ENCODE measurements at regions of chr6 and their contacts with region 1.

Region 1: GRCh38 chr6:53171605-53172446 is 23.2 kb upstream of the GCM1 start:
- DNase-seq: peak; percentile 82 to 95 (median 92)
- ATAC-seq: peak; percentile 100
- H3K4me3 ChIP-seq: no peak overlapping the region
- H3K4me3 Mint-ChIP-seq: no peak overlapping the region
- H3K27ac ChIP-seq: no peak overlapping the region
- H3K27ac Mint-ChIP-seq: no peak overlapping the region
- H3K4me1 ChIP-seq: no peaks in the 10 kb centered on the region
- H3K4me1 Mint-ChIP-seq: no peaks in the 10 kb centered on the region
- H3K27me3 ChIP-seq: no peaks in the 10 kb centered on the region
- H3K27me3 Mint-ChIP-seq: no peaks in the 10 kb centered on the region
- CTCF ChIP-seq: peak; percentile 100

Region 2: DNA sequence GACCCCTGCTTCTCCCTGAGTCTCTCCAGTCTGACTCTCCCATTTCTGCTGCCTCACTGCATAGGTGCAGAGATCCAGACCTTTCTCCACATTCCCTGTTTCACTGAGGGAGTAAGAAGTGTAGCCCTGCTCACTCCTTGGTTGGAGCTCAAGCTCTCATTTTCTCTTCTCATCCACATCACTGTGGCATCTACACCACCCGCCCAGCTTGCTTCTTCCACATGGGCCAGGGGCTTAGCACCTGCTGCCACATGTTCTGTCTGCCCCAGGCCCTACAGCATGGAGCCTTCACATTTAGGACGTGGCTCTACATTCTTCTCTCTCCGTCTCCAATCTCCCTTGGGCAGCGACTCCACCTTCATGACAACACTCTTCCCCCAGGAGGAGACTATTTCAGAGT is 322.7 kb before region 1 on chr6:
- CTCF ChIA-PET with region 1: no interaction called
- POLR2A ChIA-PET with region 1: no interaction called
- intact Hi-C with region 1: no loop called
- DNase-seq: no peak
- ATAC-seq: no peak
- H3K4me3 ChIP-seq: no peak overlapping the region
- H3K4me3 Mint-ChIP-seq: no peak overlapping the region
- H3K27ac ChIP-seq: no peak overlapping the region
- H3K27ac Mint-ChIP-seq: no peak overlapping the region
- H3K4me1 ChIP-seq: no peaks in the 10 kb centered on the region
- H3K4me1 Mint-ChIP-seq: no peaks in the 10 kb centered on the region
- H3K27me3 ChIP-seq: peaks cover 0 to 3% of the 10 kb centered on the region in 2 experiments
- H3K27me3 Mint-ChIP-seq: peaks cover 24% of the 10 kb centered on the region
- CTCF ChIP-seq: no peak

Region 3: DNA sequence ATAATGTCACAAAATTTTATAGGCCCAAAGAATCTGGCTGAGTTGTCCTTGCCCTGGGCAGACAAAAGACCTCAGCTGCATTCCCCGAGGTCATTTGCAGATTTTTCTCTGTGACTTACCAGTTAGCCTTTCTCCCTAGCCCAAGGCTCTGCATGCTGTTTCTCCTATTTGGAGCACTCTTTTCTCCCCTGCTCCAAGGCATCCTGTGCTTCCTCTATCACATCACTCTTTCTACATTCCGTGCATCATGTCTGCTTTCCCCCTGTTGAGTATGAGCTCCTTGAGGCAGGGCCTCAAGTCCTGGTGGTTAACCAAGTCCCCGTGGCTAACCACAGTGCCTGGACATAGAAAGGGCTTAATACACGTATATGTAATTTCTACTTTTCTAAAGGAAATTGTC is 261.7 kb before region 1 on chr6:
- CTCF ChIA-PET with region 1: no interaction called
- POLR2A ChIA-PET with region 1: no interaction called
- intact Hi-C with region 1: no loop called
- DNase-seq: no peak
- ATAC-seq: no peak
- H3K4me3 ChIP-seq: no peak overlapping the region
- H3K4me3 Mint-ChIP-seq: no peak overlapping the region
- H3K27ac ChIP-seq: no peak overlapping the region
- H3K27ac Mint-ChIP-seq: no peak overlapping the region
- H3K4me1 ChIP-seq: no peaks in the 10 kb centered on the region
- H3K4me1 Mint-ChIP-seq: no peaks in the 10 kb centered on the region
- H3K27me3 ChIP-seq: no peaks in the 10 kb centered on the region
- H3K27me3 Mint-ChIP-seq: no peaks in the 10 kb centered on the region
- CTCF ChIP-seq: no peak

Region 4: DNA sequence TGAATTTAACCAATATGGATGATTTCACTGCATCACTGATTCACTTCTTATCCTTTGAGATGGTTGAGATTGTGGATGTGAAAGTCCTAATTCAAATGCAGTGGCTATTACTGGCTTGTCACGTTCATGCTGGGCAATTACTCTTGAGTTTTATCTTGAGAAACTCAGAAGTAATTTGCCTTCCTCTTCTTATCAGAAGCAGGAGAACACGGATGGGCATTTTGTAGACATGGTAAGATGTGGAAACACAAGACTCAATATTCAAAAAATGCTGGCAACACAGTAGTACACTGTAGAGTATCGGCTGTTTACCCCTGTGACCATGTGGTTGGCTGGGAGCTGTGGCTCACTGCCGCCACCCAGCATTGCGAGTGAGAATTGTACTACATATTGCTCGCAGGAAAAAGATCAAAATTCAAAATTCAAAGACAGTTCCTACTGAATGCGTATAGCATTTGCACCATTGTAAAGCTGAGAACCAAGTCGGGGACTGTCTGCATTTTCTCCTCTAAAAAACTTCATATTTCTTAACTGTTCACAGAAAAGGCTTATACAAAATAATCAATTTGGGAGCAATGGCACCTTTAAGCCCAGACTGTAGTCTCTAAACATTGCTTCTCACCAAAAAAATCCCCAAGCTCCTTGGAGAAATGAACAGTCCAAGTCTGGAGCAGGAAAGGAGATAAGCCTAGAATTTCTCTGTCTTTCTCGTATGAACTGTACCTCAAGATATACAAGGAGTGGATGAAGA is 238.9 kb after region 1 on chr6:
- CTCF ChIA-PET with region 1: interaction called, 25 read pairs
- POLR2A ChIA-PET with region 1: no interaction called
- intact Hi-C with region 1: loop called (anchors 1 kb)
- DNase-seq: peak; percentile 40 to 83 (median 60)
- ATAC-seq: peak; percentile 100
- H3K4me3 ChIP-seq: no peak overlapping the region
- H3K4me3 Mint-ChIP-seq: no peak overlapping the region
- H3K27ac ChIP-seq: no peak overlapping the region
- H3K27ac Mint-ChIP-seq: no peak overlapping the region
- H3K4me1 ChIP-seq: peaks cover 3% of the 10 kb centered on the region
- H3K4me1 Mint-ChIP-seq: peaks cover 5% of the 10 kb centered on the region
- H3K27me3 ChIP-seq: no peaks in the 10 kb centered on the region
- H3K27me3 Mint-ChIP-seq: peaks cover 4% of the 10 kb centered on the region
- CTCF ChIP-seq: peak; percentile 85

Region 5: GRCh38 chr6:53484476-53485280 is 312.9 kb after region 1 on chr6:
- CTCF ChIA-PET with region 1: interaction called, 25 read pairs
- POLR2A ChIA-PET with region 1: no interaction called
- intact Hi-C with region 1: loop called (anchors 1 kb)
- DNase-seq: peak; percentile 21 to 85 (median 65)
- ATAC-seq: peak; percentile 65
- H3K4me3 ChIP-seq: no peak overlapping the region
- H3K4me3 Mint-ChIP-seq: no peak overlapping the region
- H3K27ac ChIP-seq: no peak overlapping the region
- H3K27ac Mint-ChIP-seq: no peak overlapping the region
- H3K4me1 ChIP-seq: no peaks in the 10 kb centered on the region
- H3K4me1 Mint-ChIP-seq: peaks cover 14% of the 10 kb centered on the region
- H3K27me3 ChIP-seq: peaks cover 6 to 8% of the 10 kb centered on the region in 2 experiments
- H3K27me3 Mint-ChIP-seq: peaks cover 32% of the 10 kb centered on the region
- CTCF ChIP-seq: peak; percentile 99

Region 6: GRCh38 chr6:53651764-53652401 is 480.1 kb after region 1 on chr6:
- CTCF ChIA-PET with region 1: no interaction called
- POLR2A ChIA-PET with region 1: no interaction called
- intact Hi-C with region 1: loop called (anchors 5 to 10 kb)
- DNase-seq: peak; percentile 56 to 90 (median 74)
- ATAC-seq: peak; percentile 88
- H3K4me3 ChIP-seq: peak overlapping the region; percentile 62
- H3K4me3 Mint-ChIP-seq: peak overlapping the region; percentile 94
- H3K27ac ChIP-seq: peak overlapping the region in 1 of 2 donors; percentile 38
- H3K27ac Mint-ChIP-seq: peak overlapping the region; percentile 81
- H3K4me1 ChIP-seq: peaks cover 16% of the 10 kb centered on the region
- H3K4me1 Mint-ChIP-seq: peaks cover 34% of the 10 kb centered on the region
- H3K27me3 ChIP-seq: no peaks in the 10 kb centered on the region
- H3K27me3 Mint-ChIP-seq: no peaks in the 10 kb centered on the region
- CTCF ChIP-seq: peak; percentile 26

Region 7: GRCh38 chr6:53725791-53726431 is 554.1 kb after region 1 on chr6:
- CTCF ChIA-PET with region 1: no interaction called
- POLR2A ChIA-PET with region 1: no interaction called
- intact Hi-C with region 1: loop called (anchors 2 to 5 kb)
- DNase-seq: peak; percentile 53 to 86 (median 68)
- ATAC-seq: peak; percentile 93
- H3K4me3 ChIP-seq: no peak overlapping the region
- H3K4me3 Mint-ChIP-seq: no peak overlapping the region
- H3K27ac ChIP-seq: no peak overlapping the region
- H3K27ac Mint-ChIP-seq: no peak overlapping the region
- H3K4me1 ChIP-seq: peaks cover 9% of the 10 kb centered on the region
- H3K4me1 Mint-ChIP-seq: peaks cover 5% of the 10 kb centered on the region
- H3K27me3 ChIP-seq: no peaks in the 10 kb centered on the region
- H3K27me3 Mint-ChIP-seq: peaks cover 13% of the 10 kb centered on the region
- CTCF ChIP-seq: peak; percentile 93